Panc1 (cell line): ENCODE measurements at regions of chr2 and their contacts with region 1.

Region 1: DNA sequence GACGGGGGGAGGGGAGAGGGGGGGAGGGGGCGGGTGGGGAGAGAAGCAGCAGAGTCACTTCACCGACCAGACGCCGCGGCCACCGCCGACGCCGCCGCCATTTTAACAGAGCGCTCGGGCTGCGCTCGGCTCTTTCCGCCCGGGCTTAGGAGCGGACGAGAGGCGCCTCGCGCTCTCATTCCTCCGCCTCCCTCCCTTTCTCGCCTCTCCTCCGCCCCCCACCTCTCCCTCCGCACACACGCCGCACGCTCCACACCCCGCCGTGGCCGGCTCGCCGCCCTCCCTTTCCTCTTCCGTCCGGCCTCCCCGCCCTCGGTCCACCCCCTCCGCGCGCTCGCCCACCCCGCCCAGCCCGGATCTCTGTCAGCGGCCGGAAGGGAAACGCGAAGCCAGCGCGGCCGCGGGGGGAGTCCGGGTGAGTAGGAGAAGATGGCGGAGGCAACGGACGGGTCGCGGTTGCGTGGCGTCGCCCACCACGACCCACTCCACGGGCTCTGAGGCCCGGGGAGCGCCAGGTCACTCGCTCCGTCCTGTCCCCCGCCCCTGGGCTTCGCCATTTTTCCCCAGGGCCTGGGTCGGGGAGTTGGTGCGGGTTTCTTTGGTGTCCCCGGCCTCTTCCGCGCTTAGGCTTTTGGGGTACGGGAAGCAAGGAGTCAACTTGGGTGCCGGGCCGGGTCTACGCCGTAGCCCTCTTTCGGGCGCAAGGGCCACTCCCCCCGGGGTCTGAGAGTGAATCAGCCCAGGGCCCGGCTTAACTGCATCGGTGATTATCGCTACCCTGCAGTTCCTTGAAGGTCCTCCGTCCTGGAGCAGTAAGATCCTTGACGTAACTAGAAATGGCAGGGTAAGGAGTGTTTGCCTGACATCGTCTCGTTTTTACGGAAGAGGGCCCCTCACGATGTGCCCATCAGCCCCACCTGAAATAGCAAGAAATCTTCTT is at the start of gene USP34:
- DNase-seq: peak; percentile 59
- ATAC-seq: peak; percentile 92
- H3K4me3 ChIP-seq: peak within 1 kb of the TSS; percentile 86 to 95
- H3K27ac ChIP-seq: peak within 1 kb of the TSS; percentile 97
- H3K4me1 ChIP-seq: peaks cover 9% of the 10 kb centered on the region
- H3K27me3 ChIP-seq: no peaks in the 10 kb centered on the region
- CTCF ChIP-seq: no peak
- total RNA-seq, gene USP34: 91.4 TPM

Region 2: GRCh38 chr2:61233581-61233980 is 237.7 kb before region 1 on chr2:
- CTCF ChIA-PET with region 1: no interaction called
- POLR2A ChIA-PET with region 1: no interaction called
- in situ Hi-C with region 1: no loop called
- intact Hi-C with region 1: no loop called
- DNase-seq: no peak
- ATAC-seq: no peak; the same call in 1 of the 2 replicates
- H3K4me3 ChIP-seq: no peak overlapping the region
- H3K27ac ChIP-seq: no peak overlapping the region
- H3K4me1 ChIP-seq: no peaks in the 10 kb centered on the region
- H3K27me3 ChIP-seq: no peaks in the 10 kb centered on the region
- CTCF ChIP-seq: no peak

Region 3: DNA sequence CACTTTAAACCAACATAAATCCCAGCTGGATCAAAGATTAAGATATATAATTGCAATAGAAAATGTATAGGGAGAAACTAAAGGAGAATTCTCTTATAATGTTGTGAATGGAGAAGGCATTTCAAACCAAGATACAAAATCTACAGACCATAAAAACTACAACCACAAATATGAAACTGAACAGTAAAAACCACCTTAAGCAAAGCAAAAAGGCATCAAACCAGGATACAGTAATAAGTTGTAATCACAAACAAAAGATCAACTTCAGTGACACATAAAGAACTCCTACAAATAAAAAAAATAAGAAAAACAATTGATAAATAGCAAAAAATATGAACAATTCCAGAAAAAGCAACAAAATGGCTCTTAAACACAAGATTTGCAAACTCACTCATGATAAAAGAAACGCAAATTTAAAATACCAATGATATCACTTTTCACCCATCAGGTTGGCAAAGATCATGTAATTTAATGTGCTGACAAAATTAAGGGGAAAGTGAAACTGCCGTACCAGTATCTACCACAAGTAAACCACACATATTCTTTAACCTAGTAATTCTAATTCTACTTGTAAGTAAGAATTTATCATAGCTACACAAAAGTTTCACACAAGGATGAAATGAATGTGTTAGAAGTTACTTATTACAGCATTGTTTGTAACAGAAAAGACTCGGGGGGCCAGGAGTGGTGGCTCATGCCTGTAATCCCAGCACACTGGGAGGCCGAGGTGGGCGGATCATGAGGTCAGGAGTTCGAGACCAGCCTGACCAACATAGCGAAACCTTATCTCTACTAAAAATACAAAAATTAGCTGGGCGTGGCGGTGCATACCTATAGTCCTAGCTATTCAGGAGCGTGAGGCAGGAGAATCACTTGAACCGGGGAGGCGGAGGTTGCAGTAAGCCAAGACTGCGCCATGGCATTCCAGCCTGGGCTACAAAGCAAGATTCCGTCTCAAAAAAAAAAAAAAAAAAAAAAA is 102.3 kb before region 1 on chr2:
- CTCF ChIA-PET with region 1: no interaction called
- POLR2A ChIA-PET with region 1: interaction called, 11 read pairs
- in situ Hi-C with region 1: no loop called
- intact Hi-C with region 1: no loop called
- DNase-seq: no peak
- ATAC-seq: no peak
- H3K4me3 ChIP-seq: no peak overlapping the region
- H3K27ac ChIP-seq: no peak overlapping the region
- H3K4me1 ChIP-seq: no peaks in the 10 kb centered on the region
- H3K27me3 ChIP-seq: no peaks in the 10 kb centered on the region
- CTCF ChIP-seq: no peak

Region 4: DNA sequence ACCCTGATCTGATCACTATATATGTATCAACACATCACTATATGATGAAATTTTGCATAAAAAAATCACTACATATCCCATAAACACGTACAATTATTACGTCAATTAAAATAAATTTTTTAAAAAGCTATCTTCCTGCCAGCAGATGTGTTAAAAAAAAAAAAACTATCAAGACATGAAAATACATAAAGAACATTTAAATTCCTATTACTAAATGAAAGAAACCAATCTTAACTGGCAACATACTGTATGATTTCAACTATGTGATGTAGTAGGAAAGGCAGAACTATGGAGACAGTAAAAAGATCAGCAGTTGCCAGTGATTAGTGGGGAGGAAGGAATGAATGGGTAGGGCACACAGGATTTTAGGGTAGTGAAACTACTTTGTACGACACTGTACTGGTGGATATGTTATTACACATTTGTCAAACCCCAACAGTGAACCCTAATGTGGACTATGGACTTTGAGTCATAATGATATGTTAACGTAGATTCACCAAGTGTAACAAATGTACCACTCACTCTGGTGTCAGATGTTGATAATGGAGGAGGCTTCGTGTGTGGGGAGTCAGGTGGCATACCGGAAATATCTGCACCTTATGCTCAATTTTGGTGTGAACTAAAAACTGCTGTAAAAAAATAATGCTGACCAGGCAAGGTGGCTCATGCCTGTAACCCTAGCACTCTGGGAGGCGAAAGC is 27.7 kb before region 1 on chr2:
- CTCF ChIA-PET with region 1: no interaction called
- POLR2A ChIA-PET with region 1: interaction called, 11 read pairs
- in situ Hi-C with region 1: no loop called
- intact Hi-C with region 1: no loop called
- DNase-seq: no peak
- ATAC-seq: no peak
- H3K4me3 ChIP-seq: no peak overlapping the region
- H3K27ac ChIP-seq: no peak overlapping the region
- H3K4me1 ChIP-seq: peaks cover 8% of the 10 kb centered on the region; the same call in 1 of the 2 replicates
- H3K27me3 ChIP-seq: no peaks in the 10 kb centered on the region
- CTCF ChIP-seq: no peak

Region 5: GRCh38 chr2:61585383-61585782 is 114.1 kb after region 1 on chr2:
- CTCF ChIA-PET with region 1: no interaction called
- POLR2A ChIA-PET with region 1: interaction called, 11 read pairs
- in situ Hi-C with region 1: no loop called
- intact Hi-C with region 1: no loop called
- DNase-seq: no peak
- ATAC-seq: no peak
- H3K4me3 ChIP-seq: no peak overlapping the region
- H3K27ac ChIP-seq: no peak overlapping the region
- H3K4me1 ChIP-seq: no peaks in the 10 kb centered on the region
- H3K27me3 ChIP-seq: no peaks in the 10 kb centered on the region
- CTCF ChIP-seq: no peak

Region 6: GRCh38 chr2:61694312-61695274 is 223.4 kb after region 1 on chr2:
- CTCF ChIA-PET with region 1: no interaction called
- POLR2A ChIA-PET with region 1: no interaction called
- in situ Hi-C with region 1: no loop called
- intact Hi-C with region 1: no loop called
- DNase-seq: no peak
- ATAC-seq: peak; percentile 99
- H3K4me3 ChIP-seq: peak overlapping the region; percentile 62 to 69
- H3K27ac ChIP-seq: peak overlapping the region; percentile 92
- H3K4me1 ChIP-seq: peaks cover 12% of the 10 kb centered on the region
- H3K27me3 ChIP-seq: no peaks in the 10 kb centered on the region; the same call in 1 of the 2 replicates
- CTCF ChIP-seq: peak; percentile 89

Region 7: GRCh38 chr2:61905372-61906185 is 434.3 kb after region 1 on chr2 and contains the start of gene COMMD1:
- CTCF ChIA-PET with region 1: no interaction called
- POLR2A ChIA-PET with region 1: no interaction called
- in situ Hi-C with region 1: no loop called
- intact Hi-C with region 1: no loop called
- DNase-seq: no peak
- ATAC-seq: peak; percentile 100
- H3K4me3 ChIP-seq: peak within 1 kb of the TSS; percentile 97 to 100
- H3K27ac ChIP-seq: peak within 1 kb of the TSS; percentile 94
- H3K4me1 ChIP-seq: peaks cover 17% of the 10 kb centered on the region; the same call in 1 of the 2 replicates
- H3K27me3 ChIP-seq: no peaks in the 10 kb centered on the region
- CTCF ChIP-seq: no peak
- total RNA-seq, gene COMMD1: 40.3 TPM